ENCODE measurements at regions of chr4 and their contacts with region 1.

Region 1: DNA sequence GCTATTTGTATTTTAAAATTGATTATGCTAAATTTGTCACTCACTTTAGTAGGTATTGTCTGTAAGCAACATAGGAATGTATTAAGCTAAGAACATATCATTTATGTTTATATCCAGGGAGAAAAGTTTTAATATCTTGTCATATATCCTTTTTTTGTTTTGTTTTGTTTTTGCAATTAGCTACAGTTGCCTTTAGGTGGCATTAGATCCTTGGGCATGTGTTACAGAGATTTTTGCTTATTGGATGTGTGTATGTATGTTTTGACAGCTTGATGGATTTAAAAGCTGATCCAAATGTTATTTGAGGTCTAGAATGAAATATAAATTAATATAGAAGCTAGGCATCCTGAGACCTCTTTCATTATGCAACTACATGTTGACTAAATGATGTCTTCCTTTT is 36.1 kb upstream of the OTUD4 start:
- DNase-seq: peak; percentile 64
- H3K4me3 ChIP-seq: no peak overlapping the region
- H3K27ac ChIP-seq: no peak overlapping the region
- H3K4me1 ChIP-seq: peaks cover 4% of the 10 kb centered on the region
- H3K27me3 ChIP-seq: peaks cover 4 to 5% of the 10 kb centered on the region in 2 experiments
- CTCF ChIP-seq: peak; percentile 28 to 34
- POLR2A ChIP-seq: no peak

Region 2: GRCh38 chr4:145154573-145154972 is 62.0 kb before region 1 on chr4:
- CTCF ChIA-PET with region 1: interaction called, 5 read pairs
- POLR2A ChIA-PET with region 1: no interaction called
- dilution Hi-C with region 1: no loop called
- intact Hi-C with region 1: loop called (anchors 1 kb)
- DNase-seq: peak; percentile 73
- H3K4me3 ChIP-seq: no peak overlapping the region
- H3K27ac ChIP-seq: peak overlapping the region; percentile 46
- H3K4me1 ChIP-seq: peaks cover 28% of the 10 kb centered on the region
- H3K27me3 ChIP-seq: no peaks in the 10 kb centered on the region
- CTCF ChIP-seq: peak; percentile 53 to 66
- POLR2A ChIP-seq: no peak

Region 3: GRCh38 chr4:145180298-145181090 is 36.0 kb before region 1 on chr4 and contains the start of gene OTUD4:
- CTCF ChIA-PET with region 1: interaction called, 3 read pairs
- POLR2A ChIA-PET with region 1: no interaction called
- dilution Hi-C with region 1: no loop called
- intact Hi-C with region 1: loop called (anchors 1 kb)
- DNase-seq: peak; percentile 96
- H3K4me3 ChIP-seq: peak within 1 kb of the TSS; percentile 78 to 93 (median 92)
- H3K27ac ChIP-seq: peak within 1 kb of the TSS; percentile 78
- H3K4me1 ChIP-seq: peaks cover 18% of the 10 kb centered on the region
- H3K27me3 ChIP-seq: no peaks in the 10 kb centered on the region
- CTCF ChIP-seq: peak in 1 of 2 donors; percentile 25
- POLR2A ChIP-seq: no peak
- total RNA-seq, gene OTUD4: 39.5 and 40.9 TPM in 2 replicates

Region 4: DNA sequence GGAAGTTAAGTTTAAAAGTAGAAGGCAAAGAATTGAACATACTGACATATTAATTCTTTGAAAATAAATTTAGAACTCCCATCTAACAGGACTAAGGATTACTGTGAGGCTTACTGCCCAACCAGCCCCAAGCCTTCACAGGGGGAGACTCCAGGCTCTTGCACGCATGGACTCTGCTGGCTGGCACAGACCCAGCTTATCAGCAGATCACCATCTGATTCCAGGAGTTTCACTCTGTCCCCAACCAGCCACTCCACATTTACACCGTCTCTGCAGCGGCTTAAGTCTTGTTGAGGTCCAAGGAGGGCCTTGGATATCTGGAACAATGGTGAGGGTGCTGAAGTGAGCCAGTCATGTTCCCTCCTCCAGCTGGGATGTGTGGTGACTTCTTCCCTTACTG is 19.8 kb before region 1 on chr4:
- CTCF ChIA-PET with region 1: interaction called, 10 read pairs
- POLR2A ChIA-PET with region 1: no interaction called
- dilution Hi-C with region 1: no loop called
- intact Hi-C with region 1: no loop called
- DNase-seq: no peak
- H3K4me3 ChIP-seq: no peak overlapping the region
- H3K27ac ChIP-seq: no peak overlapping the region
- H3K4me1 ChIP-seq: no peaks in the 10 kb centered on the region
- H3K27me3 ChIP-seq: peaks cover 6 to 9% of the 10 kb centered on the region in 2 experiments
- CTCF ChIP-seq: no peak
- POLR2A ChIP-seq: no peak

Region 5: DNA sequence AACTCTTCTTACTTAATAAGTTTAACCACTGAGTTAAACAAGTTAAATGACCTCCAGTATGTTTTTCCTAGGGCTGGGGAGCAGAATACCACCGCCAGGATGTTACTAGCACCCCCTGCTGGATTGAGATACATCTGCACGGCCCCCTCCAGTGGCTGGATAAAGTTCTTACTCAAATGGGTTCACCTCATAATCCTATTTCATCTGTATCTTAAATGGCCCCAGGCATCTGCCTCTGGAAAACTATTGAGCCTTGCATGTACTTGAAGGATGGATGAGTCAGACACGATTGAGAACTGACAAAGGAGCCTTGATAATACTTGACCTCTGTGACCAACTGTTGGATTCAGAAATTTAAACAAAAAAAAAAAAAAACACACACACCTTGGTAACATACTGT is 341.2 kb after region 1 on chr4:
- CTCF ChIA-PET with region 1: interaction called, 40 read pairs
- POLR2A ChIA-PET with region 1: no interaction called
- dilution Hi-C with region 1: no loop called
- intact Hi-C with region 1: no loop called
- DNase-seq: peak; percentile 81
- H3K4me3 ChIP-seq: no peak overlapping the region
- H3K27ac ChIP-seq: no peak overlapping the region
- H3K4me1 ChIP-seq: peaks cover 11% of the 10 kb centered on the region
- H3K27me3 ChIP-seq: no peaks in the 10 kb centered on the region
- CTCF ChIP-seq: peak; percentile 88 to 89
- POLR2A ChIP-seq: no peak